ENCODE measurements at regions of chr2 and their contacts with region 1.

Region 1: DNA sequence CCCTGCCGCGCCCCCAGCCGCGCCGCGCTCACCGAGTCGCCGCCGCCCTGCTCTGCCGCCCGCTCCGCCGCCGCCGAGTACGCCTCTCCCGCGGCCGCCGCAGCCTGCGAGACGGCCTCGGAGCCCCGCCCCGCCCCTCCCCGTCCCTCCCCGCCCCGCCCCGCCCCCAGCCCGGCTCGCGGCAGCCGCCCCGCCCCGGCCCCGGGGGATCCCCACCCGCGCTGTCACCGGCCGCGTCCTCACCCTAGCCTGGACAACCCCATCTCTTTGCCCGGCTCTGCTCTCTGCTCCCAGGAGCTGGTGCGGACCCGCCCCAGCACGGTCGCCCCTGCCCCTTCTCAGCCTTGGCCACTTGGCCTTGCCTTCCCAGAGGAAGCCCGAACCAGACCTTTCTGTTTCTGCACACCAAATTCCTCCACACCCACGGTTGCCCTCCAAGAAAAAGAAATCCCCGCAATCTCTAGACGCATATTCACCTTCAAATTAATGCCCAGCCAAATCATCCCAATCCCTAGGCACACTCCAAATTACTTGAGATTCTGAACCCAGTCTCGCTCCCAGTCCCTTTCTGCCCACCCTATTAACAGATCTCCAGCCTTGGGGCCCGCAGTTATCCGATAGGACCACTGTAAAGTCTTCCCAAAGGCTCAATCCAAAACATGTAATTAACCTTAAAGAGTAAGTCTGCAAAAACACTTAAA is at the start of gene CYRIA:
- DNase-seq: no peak
- ATAC-seq: peak; percentile 77
- H3K4me3 ChIP-seq: peak within 1 kb of the TSS; percentile 74
- H3K27ac ChIP-seq: peak within 1 kb of the TSS; percentile 4; the same call in 1 of the 2 replicates
- H3K4me1 ChIP-seq: peaks cover 20% of the 10 kb centered on the region; the same call in 1 of the 2 replicates
- H3K27me3 ChIP-seq: peaks cover 19% of the 10 kb centered on the region; the same call in 1 of the 2 replicates
- CTCF ChIP-seq: no peak
- POLR2A ChIP-seq: no peak
- RAD21 ChIP-seq: no peak
- total RNA-seq, gene CYRIA: 1.7 and 3.8 TPM in 2 replicates

Region 2: GRCh38 chr2:16189029-16189835 is 476.7 kb before region 1 on chr2:
- CTCF ChIA-PET with region 1: no interaction called
- POLR2A ChIA-PET with region 1: no interaction called
- dilution Hi-C with region 1: no loop called
- in situ Hi-C with region 1: no loop called
- intact Hi-C with region 1: no loop called
- DNase-seq: no peak
- ATAC-seq: no peak
- H3K4me3 ChIP-seq: no peak overlapping the region
- H3K27ac ChIP-seq: no peak overlapping the region
- H3K4me1 ChIP-seq: no peaks in the 10 kb centered on the region
- H3K27me3 ChIP-seq: no peaks in the 10 kb centered on the region
- CTCF ChIP-seq: no peak
- POLR2A ChIP-seq: no peak
- RAD21 ChIP-seq: no peak

Region 3: DNA sequence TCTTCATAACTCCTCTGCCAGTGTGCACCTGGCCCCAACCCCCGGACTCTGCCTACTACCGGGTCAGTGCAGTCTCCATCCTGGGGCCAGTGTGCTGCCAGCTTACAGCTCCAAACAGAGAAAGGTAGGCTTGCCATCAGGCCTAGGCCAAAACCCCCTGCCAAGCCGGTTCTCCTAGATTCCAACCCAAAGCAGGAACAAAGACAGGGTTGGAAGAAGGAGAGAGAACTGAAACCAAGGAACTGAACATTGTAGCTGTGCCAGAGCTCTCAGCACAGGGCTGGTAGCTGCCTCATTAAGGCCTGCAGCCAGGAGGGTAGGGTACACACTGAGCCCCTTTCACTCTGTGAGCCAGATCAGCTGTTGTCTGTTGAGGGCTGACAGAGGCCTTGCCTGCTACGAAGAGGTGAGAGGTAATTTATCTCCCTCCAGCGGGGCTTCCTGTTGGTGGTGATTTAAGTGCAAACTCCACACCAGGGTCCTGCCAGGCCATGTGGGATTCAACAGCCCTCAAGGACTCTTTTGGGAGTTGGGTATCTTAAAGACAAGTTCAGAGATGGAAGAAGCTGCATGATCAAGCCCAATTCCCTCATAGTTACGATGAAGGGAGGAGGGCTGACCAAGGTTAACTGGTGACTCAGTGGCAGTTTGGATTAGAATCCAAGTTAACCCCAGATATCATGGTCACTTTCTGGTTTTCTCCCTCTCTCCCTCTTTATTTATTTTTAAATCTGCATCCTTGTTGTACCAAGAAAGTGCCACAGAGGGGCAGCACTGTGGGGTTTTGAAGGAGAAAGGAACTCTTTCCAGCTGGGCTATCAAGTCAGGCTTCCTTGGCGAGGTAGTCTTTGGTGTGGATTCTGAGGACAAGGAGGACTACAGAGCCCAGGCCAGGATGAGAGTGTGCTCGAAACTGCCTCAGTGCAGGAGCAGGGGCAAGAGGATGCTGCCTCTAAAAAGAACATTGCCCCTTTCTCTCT is 48.3 kb before region 1 on chr2:
- CTCF ChIA-PET with region 1: interaction called, 5 read pairs
- POLR2A ChIA-PET with region 1: no interaction called
- dilution Hi-C with region 1: no loop called
- in situ Hi-C with region 1: no loop called
- intact Hi-C with region 1: loop called (anchors 2 kb)
- DNase-seq: peak; percentile 56
- ATAC-seq: peak; percentile 40
- H3K4me3 ChIP-seq: no peak overlapping the region
- H3K27ac ChIP-seq: no peak overlapping the region
- H3K4me1 ChIP-seq: peaks cover 21% of the 10 kb centered on the region
- H3K27me3 ChIP-seq: no peaks in the 10 kb centered on the region
- CTCF ChIP-seq: peak; percentile 67
- POLR2A ChIP-seq: no peak
- RAD21 ChIP-seq: peak; percentile 70

Region 4: GRCh38 chr2:16635791-16636699 is 29.9 kb before region 1 on chr2:
- CTCF ChIA-PET with region 1: no interaction called
- POLR2A ChIA-PET with region 1: no interaction called
- dilution Hi-C with region 1: no loop called
- in situ Hi-C with region 1: no loop called
- intact Hi-C with region 1: no loop called
- DNase-seq: peak; percentile 71
- ATAC-seq: peak; percentile 83
- H3K4me3 ChIP-seq: no peak overlapping the region
- H3K27ac ChIP-seq: peak overlapping the region; percentile 36; the same call in 1 of the 2 replicates
- H3K4me1 ChIP-seq: peaks cover 12% of the 10 kb centered on the region
- H3K27me3 ChIP-seq: no peaks in the 10 kb centered on the region
- CTCF ChIP-seq: no peak
- POLR2A ChIP-seq: no peak
- RAD21 ChIP-seq: no peak

Region 5: DNA sequence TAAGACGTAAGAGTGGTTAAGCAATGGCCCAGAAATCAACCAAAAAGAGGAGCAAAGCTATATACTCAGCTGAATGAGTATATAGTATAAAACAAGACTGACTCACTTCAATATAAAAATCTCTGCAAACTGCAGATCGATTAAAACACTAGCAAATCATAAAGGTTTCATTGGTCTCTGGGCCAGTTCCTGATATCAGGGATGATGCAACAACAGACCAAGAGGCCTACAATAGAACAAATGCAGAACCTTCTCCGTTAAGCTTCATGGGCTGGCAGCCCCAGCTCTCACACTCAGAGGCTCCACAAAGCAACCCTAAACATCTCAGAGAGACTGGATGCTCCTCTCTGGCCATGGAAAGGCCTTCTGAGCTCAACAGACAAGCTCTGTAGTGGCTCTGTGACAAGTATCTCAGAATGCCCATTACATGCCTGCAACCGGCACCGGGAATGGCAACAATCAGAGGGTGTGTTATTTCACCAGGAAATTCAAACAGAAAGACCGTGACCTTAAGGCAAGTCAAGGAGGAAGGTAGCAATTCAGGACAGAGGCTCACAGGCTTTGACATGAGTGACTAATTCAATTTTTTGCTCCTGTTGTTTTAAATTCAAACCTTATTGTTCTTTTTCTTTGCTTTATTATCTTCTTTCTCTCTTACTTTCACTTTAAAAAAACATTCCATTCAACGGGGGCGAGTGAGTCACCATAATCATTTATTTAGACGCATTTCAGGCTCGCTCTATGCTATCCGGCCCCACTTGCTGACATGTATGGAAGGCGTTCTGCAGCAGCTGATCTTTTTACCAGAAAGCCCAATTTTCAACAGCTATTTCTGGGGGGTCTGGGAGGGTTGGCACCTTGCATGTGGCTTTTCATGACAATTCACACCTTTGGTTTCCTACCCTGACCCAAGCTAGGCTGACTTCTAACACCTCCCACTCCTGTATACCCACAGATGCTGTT is 15.3 kb before region 1 on chr2:
- CTCF ChIA-PET with region 1: no interaction called
- POLR2A ChIA-PET with region 1: no interaction called
- dilution Hi-C with region 1: no loop called
- in situ Hi-C with region 1: no loop called
- intact Hi-C with region 1: loop called (anchors 1 kb)
- DNase-seq: peak; percentile 78
- ATAC-seq: peak; percentile 67
- H3K4me3 ChIP-seq: peak overlapping the region; percentile 38
- H3K27ac ChIP-seq: peak overlapping the region; percentile 89
- H3K4me1 ChIP-seq: peaks cover 30% of the 10 kb centered on the region
- H3K27me3 ChIP-seq: no peaks in the 10 kb centered on the region
- CTCF ChIP-seq: no peak
- POLR2A ChIP-seq: no peak
- RAD21 ChIP-seq: no peak

Region 6: DNA sequence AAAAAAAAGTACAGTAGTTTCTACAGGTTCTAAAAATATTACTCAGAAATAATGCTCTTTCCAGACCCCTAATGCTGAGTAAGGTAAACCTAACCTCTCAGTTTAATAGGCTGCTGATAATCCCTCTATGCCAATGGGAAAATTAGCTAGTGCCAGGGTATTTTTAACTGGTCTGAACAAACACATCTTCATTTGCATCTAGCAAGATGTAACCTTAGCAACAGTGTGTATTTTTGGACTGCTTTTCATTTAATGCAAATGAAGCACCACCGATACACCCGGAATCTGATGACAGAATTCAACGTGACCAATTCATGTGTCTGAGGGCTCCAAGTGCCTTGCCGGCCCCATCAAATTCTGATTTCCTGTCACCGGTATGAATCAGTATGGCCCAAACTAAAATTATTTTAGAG is 47.1 kb after region 1 on chr2:
- CTCF ChIA-PET with region 1: no interaction called
- POLR2A ChIA-PET with region 1: no interaction called
- dilution Hi-C with region 1: no loop called
- in situ Hi-C with region 1: no loop called
- intact Hi-C with region 1: loop called (anchors 5 kb)
- DNase-seq: no peak
- ATAC-seq: no peak
- H3K4me3 ChIP-seq: no peak overlapping the region
- H3K27ac ChIP-seq: no peak overlapping the region
- H3K4me1 ChIP-seq: no peaks in the 10 kb centered on the region
- H3K27me3 ChIP-seq: peaks cover 2% of the 10 kb centered on the region; the same call in 1 of the 2 replicates
- CTCF ChIP-seq: no peak
- POLR2A ChIP-seq: no peak
- RAD21 ChIP-seq: no peak

Region 7: DNA sequence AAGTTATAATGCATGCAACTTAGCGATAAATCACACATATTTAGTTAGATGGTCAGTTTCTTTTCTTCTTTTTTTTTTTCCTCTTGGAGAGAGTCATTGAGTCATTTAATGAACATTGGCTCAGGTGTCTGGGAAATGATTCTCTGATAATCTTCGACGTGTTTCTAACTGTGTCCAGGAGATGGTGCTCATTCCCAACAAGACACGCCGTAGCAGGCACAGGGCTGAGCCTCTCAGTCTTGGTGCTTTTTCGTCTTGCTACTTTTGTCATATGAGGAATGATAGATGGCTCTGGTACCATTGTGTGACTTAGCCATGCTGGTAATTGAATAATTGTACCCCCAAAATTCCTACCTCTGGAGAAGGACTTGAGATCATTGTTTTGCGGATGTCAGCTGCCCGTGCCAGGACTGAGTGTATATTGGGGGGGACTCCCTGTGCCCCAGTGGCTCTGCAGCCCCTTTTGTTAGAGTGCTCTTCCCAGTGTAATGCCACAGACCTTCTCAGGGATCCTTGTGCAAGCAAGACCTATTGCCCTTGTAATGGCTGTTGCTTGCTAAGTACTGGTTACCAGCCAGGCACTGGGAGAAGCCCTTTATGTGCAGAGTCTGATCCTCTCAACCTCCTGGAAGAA is 107.3 kb after region 1 on chr2:
- CTCF ChIA-PET with region 1: no interaction called
- POLR2A ChIA-PET with region 1: no interaction called
- dilution Hi-C with region 1: no loop called
- in situ Hi-C with region 1: no loop called
- intact Hi-C with region 1: no loop called
- DNase-seq: peak; percentile 42
- ATAC-seq: peak; percentile 87
- H3K4me3 ChIP-seq: no peak overlapping the region
- H3K27ac ChIP-seq: no peak overlapping the region
- H3K4me1 ChIP-seq: no peaks in the 10 kb centered on the region
- H3K27me3 ChIP-seq: peaks cover 1% of the 10 kb centered on the region; the same call in 1 of the 2 replicates
- CTCF ChIP-seq: peak; percentile 56
- POLR2A ChIP-seq: no peak
- RAD21 ChIP-seq: peak; percentile 70

Region 8: DNA sequence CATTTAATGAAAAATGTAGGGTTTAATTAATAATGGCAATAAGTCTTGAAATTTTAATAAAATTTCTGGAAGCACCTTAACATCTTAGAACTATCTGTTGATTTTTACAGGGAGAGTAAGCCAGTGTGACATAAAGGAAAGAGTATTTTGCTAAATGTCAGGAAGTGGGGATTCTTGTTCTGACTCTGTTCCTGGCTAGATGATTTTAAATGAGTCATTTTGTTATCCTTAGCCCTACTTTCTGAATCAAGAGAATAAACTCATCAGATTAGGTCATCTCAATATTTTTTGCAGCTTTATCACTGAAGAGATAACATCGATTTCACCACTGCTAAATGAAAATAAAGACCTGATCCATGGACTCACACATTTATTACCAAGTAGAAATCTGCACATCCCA is 377.3 kb after region 1 on chr2:
- CTCF ChIA-PET with region 1: no interaction called
- POLR2A ChIA-PET with region 1: no interaction called
- dilution Hi-C with region 1: no loop called
- in situ Hi-C with region 1: no loop called
- intact Hi-C with region 1: no loop called
- DNase-seq: peak; percentile 43
- ATAC-seq: no peak
- H3K4me3 ChIP-seq: no peak overlapping the region
- H3K27ac ChIP-seq: no peak overlapping the region
- H3K4me1 ChIP-seq: no peaks in the 10 kb centered on the region
- H3K27me3 ChIP-seq: no peaks in the 10 kb centered on the region
- CTCF ChIP-seq: no peak
- POLR2A ChIP-seq: no peak
- RAD21 ChIP-seq: no peak

Measured in IMR-90 (cell line).